Activated T-helper 2 cell treated with anti-CD3 and anti-CD28 coated beads, Interferon-gamma antibody, Interleukin-2, Interleukin-4, amounts not matched to agents 10 μg/mL and 5 μg/mL and 100 μg/mL, durations not matched to agents 14 hours and 24 hours and 36 hours (primary cell): ENCODE measurements at regions of chr2 and their contacts with region 1.

Region 1: GRCh38 chr2:112626604-112627059 is 19.1 kb upstream of the SLC20A1 start:
- DNase-seq: peak; percentile 55
- H3K4me3 Mint-ChIP-seq: peak overlapping the region; percentile 26
- H3K27ac Mint-ChIP-seq: peak overlapping the region; percentile 75
- H3K4me1 Mint-ChIP-seq: peaks cover 65% of the 10 kb centered on the region
- H3K27me3 Mint-ChIP-seq: peaks cover 1% of the 10 kb centered on the region

Region 2: DNA sequence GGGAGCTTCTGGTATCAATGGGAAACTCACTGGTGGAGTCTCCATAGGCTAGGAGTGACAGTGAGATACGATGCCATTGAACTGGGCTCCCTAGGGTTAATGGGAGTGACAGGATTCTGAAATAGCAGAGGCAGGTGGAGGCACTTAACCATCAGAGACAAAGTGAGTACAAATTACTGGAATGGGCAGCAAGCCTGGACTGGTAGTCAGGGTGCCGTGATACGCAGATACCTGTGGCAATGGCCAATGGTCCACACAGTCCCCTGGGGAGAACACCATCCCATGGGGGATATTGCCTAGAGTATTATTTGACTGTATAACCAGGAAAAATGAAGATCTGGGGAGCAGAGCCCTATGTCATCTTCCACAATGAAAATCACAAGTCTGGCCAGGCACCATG is 24.9 kb before region 1 on chr2:
- intact Hi-C with region 1: loop called (anchors 1 kb)
- DNase-seq: no peak
- H3K4me3 Mint-ChIP-seq: no peak overlapping the region
- H3K27ac Mint-ChIP-seq: no peak overlapping the region
- H3K4me1 Mint-ChIP-seq: peaks cover 5% of the 10 kb centered on the region
- H3K27me3 Mint-ChIP-seq: no peaks in the 10 kb centered on the region

Region 3: DNA sequence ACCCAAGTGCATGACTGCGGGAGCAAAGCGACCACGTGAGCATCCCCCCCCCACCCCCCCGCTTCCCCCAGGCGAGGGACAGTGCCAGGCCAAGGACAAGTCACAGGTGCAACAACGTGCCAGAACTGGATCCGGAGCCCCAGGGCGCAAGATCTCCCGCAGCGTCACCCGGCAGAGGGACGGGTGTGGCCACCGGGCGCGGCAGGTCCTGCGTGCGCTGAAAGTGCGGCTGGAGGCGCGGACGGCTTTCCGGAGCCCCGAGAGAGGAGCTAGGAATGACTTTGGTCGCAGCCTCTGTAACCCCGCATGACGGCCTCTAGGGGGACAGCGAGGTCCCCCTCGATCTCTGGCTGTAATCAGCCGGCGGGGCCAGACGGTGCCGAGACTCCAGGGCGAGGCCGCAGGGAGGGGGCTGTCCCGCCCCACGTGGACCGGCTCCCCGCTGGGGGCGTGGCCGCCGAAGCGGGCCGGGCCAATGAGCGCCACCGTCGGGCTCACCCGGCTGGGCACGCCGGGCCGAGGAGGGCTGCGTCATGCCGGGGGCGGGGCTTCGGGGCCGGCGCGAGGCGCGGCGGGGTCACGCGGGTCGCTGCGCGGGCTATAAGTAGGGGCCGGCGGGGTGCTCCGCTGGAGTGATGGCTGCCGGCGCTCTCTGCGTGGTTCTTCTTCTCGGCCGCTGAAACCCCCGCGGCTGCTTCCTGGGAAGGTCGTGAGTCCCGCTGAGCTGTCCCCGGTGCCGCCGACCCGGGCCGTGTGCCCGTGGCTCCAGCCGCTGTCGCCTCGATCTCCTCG is 18.9 kb after region 1 on chr2 and contains the start of gene SLC20A1:
- intact Hi-C with region 1: loop called (anchors 1 kb)
- DNase-seq: peak; percentile 98
- H3K4me3 Mint-ChIP-seq: peak within 1 kb of the TSS; percentile 97
- H3K27ac Mint-ChIP-seq: peak within 1 kb of the TSS; percentile 77
- H3K4me1 Mint-ChIP-seq: peaks cover 68% of the 10 kb centered on the region
- H3K27me3 Mint-ChIP-seq: no peaks in the 10 kb centered on the region
- total RNA-seq, gene SLC20A1: 128 TPM in 2 replicates

Region 4: DNA sequence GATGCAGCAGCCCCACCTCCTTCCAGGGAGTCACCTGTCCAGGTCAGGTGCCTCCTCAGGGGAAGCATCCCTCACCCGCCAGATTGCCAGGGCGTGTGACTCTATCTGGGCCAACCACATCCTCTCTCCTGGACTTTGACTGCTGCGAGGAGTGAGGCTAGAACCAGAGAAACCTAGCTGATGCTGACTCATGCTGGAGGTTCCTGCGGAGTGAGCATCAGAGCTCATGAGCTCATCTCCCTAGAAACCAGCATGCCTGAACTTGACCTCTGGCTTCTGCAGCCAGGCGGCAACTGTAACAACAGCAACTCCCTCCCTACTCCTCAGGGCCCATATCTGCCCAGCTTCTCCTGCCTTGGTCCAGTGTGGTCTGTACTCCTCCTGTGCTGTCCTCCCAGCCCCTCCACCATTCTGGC is 65.9 kb after region 1 on chr2:
- intact Hi-C with region 1: loop called (anchors 1 kb)
- DNase-seq: peak; percentile 70
- H3K4me3 Mint-ChIP-seq: peak overlapping the region; percentile 7
- H3K27ac Mint-ChIP-seq: peak overlapping the region; percentile 77
- H3K4me1 Mint-ChIP-seq: peaks cover 31% of the 10 kb centered on the region
- H3K27me3 Mint-ChIP-seq: no peaks in the 10 kb centered on the region

Region 5: GRCh38 chr2:112712903-112713584 is 86.4 kb after region 1 on chr2:
- intact Hi-C with region 1: loop called (anchors 1 kb)
- DNase-seq: no peak
- H3K4me3 Mint-ChIP-seq: no peak overlapping the region
- H3K27ac Mint-ChIP-seq: peak overlapping the region; percentile 61
- H3K4me1 Mint-ChIP-seq: peaks cover 42% of the 10 kb centered on the region
- H3K27me3 Mint-ChIP-seq: peaks cover 1% of the 10 kb centered on the region

Region 6: DNA sequence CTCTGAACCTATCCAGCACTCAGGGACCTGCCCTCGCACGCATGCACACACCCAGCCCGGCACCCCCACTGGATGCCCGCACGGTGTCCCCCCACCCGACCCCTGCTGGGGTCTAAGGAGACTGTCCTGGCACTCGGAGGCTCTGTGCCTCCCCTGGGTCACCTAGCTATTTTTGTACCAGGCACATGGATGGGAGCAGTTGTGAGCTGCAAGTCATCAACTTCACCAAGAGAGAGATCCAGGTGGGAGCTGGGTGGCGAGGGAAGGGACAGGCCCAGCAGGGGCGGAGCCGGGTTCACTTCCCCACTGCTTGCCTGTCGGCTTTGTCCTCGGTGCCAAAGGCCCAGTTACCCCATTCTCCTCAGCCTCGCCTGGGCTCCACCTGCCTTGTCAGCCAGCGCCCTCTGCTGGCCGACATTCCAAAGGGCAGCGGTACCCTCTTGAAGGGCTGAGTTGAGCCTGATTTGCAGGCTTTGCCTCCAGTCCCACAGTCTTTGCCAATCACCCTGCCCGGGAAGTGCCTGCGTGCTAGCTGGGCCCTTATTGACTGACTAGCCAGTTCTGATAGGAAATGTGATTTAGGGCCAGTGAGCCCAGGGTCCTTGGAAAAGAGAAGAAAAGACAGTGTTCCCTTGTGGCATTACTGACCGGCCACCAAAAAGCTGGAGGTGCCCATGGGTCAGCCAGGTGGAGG is 100.0 kb after region 1 on chr2:
- intact Hi-C with region 1: loop called (anchors 1 kb)
- DNase-seq: peak; percentile 83
- H3K4me3 Mint-ChIP-seq: no peak overlapping the region
- H3K27ac Mint-ChIP-seq: no peak overlapping the region
- H3K4me1 Mint-ChIP-seq: peaks cover 32% of the 10 kb centered on the region
- H3K27me3 Mint-ChIP-seq: peaks cover 2% of the 10 kb centered on the region

Region 7: DNA sequence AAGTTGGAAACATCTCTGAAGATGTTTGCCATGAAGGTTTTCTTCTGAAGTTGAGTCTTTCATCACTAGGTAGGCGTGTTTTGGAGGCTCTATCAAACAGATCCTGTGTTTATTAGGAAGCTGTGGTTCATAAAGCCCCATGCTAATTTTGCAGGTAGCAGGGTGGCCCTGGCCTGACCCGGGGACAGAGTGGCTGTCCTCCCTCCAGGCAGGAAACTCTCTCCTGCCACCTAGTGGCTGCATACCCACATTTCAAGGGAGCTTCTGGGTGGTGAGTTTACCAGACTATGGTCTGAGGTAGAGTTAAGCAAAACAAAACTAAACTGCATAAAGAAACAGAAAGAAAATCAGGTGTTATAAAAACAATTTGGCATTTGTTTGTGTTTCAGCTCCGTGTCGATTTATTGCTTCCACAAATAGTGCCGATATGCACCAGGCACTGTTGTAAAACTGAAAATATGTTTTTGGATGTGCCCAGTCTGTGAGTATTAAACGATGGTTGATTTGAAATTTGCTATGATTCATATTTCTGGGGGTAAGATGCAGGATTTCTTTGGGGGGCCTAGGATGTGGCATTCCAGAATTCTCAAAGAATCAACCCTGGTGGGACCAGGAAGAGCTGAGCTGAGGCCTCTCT is 258.4 kb after region 1 on chr2:
- intact Hi-C with region 1: loop called (anchors 10 kb)
- DNase-seq: peak; percentile 61
- H3K4me3 Mint-ChIP-seq: no peak overlapping the region
- H3K27ac Mint-ChIP-seq: peak overlapping the region; percentile 30
- H3K4me1 Mint-ChIP-seq: peaks cover 34% of the 10 kb centered on the region
- H3K27me3 Mint-ChIP-seq: no peaks in the 10 kb centered on the region